Left lung (tissue), 14 donors: ENCODE measurements at regions of chr1 and their contacts with region 1.

Region 1: GRCh38 chr1:233790662-233791375 is 113.7 kb upstream of the SLC35F3 start:
- DNase-seq: peak in 2 of 4 donors; percentile 46 to 61
- ATAC-seq: peak; percentile 96
- H3K4me3 ChIP-seq: no peak overlapping the region
- H3K27ac ChIP-seq: no peak overlapping the region
- H3K4me1 ChIP-seq: no peaks in the 10 kb centered on the region
- H3K27me3 ChIP-seq: no peaks in the 10 kb centered on the region
- CTCF ChIP-seq: peak; percentile 70 to 86

Region 2: DNA sequence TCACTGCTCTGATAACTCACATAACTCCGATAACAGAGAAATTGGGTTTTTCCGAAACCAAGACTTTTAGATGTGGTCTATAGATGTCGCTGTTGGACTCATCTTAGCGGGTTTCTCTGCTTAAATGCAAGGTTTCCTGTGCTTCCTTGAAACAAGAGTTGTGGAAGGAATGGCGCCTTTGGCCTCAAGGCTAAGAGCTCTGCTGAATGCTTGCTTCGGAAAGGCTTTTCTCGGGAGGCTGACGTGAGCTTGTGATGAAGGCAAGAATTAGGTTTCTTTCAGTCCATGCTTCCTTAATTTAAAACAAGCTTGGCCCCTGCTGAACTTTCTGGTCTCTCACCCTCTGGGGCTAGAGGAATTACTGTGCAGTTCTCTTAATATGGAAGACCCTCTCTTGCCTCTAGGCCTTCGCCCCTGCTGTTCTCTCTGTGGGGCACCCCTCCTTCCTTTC is 349.8 kb before region 1 on chr1:
- intact Hi-C with region 1: loop called in 1 of 2 experiments (anchors 5 kb)
- DNase-seq: peak in 2 of 4 donors; percentile 51 to 65
- ATAC-seq: peak; percentile 92
- H3K4me3 ChIP-seq: no peak overlapping the region
- H3K27ac ChIP-seq: no peak overlapping the region
- H3K4me1 ChIP-seq: no peaks in the 10 kb centered on the region
- H3K27me3 ChIP-seq: peaks cover 0 to 15% of the 10 kb centered on the region in 2 donors
- CTCF ChIP-seq: peak; percentile 42 to 43

Region 3: DNA sequence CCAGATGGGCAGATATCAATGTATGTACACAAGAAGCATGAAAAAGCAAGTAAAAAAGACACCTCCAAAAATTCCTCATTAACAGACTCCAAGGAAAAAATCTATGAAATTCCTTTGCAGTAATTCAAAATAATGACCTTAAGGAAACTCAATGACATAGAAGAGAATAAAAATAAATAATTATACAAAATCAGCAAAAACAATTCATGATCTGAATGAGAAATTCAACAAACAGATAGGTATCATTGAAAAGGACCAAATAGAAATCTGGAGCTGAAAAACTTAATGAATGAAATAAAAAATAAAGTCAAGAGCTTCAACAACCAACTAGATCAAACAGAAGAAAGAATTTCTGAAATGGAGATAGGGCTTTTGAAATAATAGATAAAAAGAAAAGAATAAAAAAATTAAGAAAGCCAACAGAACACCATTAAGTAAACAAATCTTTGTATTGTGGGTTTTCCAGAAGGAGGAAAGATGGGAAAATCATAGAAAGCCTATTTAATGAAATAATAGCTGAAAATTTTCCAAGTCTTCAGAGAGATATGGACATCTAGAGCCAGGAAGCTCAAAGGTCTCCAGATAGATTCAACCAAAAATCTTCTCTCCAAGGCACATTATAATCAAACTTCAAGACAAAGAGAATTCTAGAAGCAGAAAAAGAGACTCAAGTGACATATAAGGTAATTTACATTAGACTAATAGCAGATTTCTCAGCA is 229.0 kb before region 1 on chr1:
- intact Hi-C with region 1: no loop called
- DNase-seq: no peak
- ATAC-seq: no peak
- H3K4me3 ChIP-seq: no peak overlapping the region
- H3K27ac ChIP-seq: no peak overlapping the region
- H3K4me1 ChIP-seq: no peaks in the 10 kb centered on the region
- H3K27me3 ChIP-seq: no peaks in the 10 kb centered on the region
- CTCF ChIP-seq: no peak